Activated naive CD4-positive, alpha-beta T cell treated with anti-CD3 and anti-CD28 coated beads for 36 hours (primary cell): ENCODE measurements at regions of chr20 and their contacts with region 1.

Region 1: DNA sequence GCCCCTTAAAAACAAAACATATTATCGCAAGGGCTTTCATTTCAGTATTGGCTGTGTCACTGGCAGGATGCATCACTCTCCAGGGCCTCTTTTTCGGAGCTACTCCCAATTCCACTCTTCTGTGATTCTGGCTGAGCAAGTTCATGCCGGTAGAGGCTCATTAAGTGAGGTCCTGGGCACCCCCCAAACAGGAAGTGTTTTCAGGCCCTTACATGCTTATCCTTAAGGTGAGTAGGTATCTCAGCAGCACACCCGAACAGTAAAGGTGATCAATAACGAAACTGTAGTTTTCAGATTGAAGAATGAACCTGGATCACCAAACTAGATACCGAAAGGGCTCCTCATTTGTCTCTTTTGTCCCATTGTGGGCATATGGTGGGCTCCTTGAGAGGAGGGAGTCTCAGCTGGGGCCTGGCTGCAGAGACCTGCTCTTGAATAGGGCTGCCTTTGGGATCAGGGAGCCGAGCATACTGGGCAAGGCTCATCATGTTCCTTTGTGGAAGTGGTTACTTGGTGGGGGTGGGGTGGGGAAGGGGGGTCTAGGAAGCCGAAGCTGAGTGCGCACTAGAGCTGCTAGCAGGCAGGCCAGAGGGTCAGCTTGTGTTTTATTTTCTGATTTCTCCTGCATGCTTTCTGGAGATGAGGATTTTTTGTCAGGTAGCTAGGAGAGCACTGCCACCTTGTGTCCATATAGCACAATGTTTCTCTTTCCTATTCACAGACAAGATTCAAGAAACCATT is 65.2 kb downstream of the CDS2 start:
- DNase-seq: peak; percentile 67
- H3K4me3 Mint-ChIP-seq: no peak overlapping the region
- H3K27ac Mint-ChIP-seq: peak overlapping the region; percentile 78
- H3K4me1 Mint-ChIP-seq: peaks cover 19% of the 10 kb centered on the region
- H3K27me3 Mint-ChIP-seq: no peaks in the 10 kb centered on the region

Region 2: GRCh38 chr20:5056801-5057599 is 135.0 kb before region 1 on chr20:
- CTCF ChIA-PET with region 1: interaction called, 9 read pairs
- intact Hi-C with region 1: loop called (anchors 1 kb)
- DNase-seq: peak; percentile 84
- H3K4me3 Mint-ChIP-seq: peak overlapping the region; percentile 10
- H3K27ac Mint-ChIP-seq: peak overlapping the region; percentile 46
- H3K4me1 Mint-ChIP-seq: peaks cover 16% of the 10 kb centered on the region
- H3K27me3 Mint-ChIP-seq: no peaks in the 10 kb centered on the region

Region 3: GRCh38 chr20:5119435-5120188 is 72.4 kb before region 1 on chr20 and contains the start of gene PCNA:
- CTCF ChIA-PET with region 1: interaction called, 180 read pairs
- intact Hi-C with region 1: no loop called
- DNase-seq: peak; percentile 99
- H3K4me3 Mint-ChIP-seq: peak within 1 kb of the TSS; percentile 93
- H3K27ac Mint-ChIP-seq: peak within 1 kb of the TSS; percentile 99
- H3K4me1 Mint-ChIP-seq: peaks cover 44% of the 10 kb centered on the region
- H3K27me3 Mint-ChIP-seq: no peaks in the 10 kb centered on the region
- total RNA-seq, gene PCNA: 631 to 641 TPM

Region 4: GRCh38 chr20:5168651-5169396 is 23.2 kb before region 1 on chr20:
- CTCF ChIA-PET with region 1: interaction called, 18 read pairs
- intact Hi-C with region 1: loop called (anchors 2 kb)
- DNase-seq: peak; percentile 16
- H3K4me3 Mint-ChIP-seq: no peak overlapping the region
- H3K27ac Mint-ChIP-seq: peak overlapping the region; percentile 47
- H3K4me1 Mint-ChIP-seq: peaks cover 66% of the 10 kb centered on the region
- H3K27me3 Mint-ChIP-seq: no peaks in the 10 kb centered on the region

Region 5: DNA sequence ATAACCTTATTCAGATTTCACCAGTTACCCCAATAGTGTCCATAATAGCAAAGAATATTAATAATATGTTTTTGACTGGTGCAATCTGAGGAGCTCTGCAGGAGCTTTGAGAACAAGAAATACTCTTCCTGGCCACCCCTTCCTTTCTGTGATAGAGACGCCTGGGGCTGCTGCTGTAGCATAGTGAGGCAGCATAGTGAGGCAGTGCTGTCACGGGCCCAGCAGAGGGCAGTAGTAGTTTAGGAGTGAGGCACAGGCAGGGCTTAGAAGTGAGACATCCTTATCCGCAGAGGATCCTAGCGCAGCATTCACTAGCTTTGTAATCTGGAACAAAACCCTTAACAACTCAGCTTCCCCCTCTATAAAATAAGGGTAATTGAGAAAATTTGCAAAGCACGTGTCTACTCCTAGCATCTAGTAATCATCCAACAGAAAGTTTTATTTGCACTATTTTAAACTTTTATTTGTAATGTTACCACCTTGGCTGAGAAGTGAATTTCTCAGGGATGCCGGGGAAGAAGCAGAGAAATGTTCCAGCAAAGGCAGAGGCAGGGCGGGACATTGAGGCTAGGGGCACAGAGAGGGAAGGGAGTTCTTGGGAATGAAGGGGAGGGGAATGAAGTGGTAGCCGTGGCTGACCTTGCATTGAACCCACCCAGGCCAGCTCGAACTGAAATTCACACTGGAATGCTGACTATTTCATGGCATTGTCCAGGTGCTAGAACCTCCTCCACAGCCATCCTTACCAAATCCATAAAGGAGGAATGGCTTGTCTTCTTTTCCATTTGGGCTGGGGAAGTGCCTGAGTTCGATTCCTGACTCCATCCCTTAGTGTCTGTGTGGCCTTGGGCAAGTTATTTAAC is 13.6 kb after region 1 on chr20:
- CTCF ChIA-PET with region 1: interaction called, 13 read pairs
- intact Hi-C with region 1: no loop called
- DNase-seq: peak; percentile 86
- H3K4me3 Mint-ChIP-seq: no peak overlapping the region
- H3K27ac Mint-ChIP-seq: no peak overlapping the region
- H3K4me1 Mint-ChIP-seq: peaks cover 2% of the 10 kb centered on the region
- H3K27me3 Mint-ChIP-seq: no peaks in the 10 kb centered on the region

Region 6: DNA sequence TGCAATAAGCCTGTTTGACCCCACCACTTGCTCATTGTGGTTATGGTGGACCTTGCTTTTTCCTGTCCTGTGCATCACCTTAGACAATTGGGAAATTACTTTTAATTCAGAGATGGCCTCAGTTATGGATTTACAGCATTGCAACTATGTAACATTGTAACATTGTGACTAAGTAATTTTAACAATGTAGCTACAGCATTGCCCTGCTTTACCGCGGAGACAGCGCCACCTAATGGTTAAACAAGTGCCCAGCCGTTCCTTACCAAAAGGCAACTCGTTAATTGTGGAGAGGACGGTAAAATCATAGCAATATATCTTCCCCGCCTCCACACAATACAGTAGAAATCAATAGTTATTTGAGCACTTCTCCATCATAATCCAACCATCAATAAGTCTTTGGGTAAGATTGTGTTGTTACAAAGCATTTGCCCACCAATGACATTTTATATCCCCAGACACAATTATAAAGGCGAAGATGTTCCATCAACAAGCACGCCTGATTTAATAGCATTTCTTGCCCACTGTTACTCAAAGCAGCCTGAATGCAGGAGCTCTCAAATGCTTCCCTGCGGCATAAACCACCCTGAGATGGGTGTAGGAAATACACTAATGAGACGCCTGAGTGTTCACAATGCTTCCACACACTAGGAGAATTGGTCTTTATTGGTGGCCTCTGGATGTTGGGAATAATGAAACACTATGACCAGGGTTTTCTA is 31.1 kb after region 1 on chr20:
- CTCF ChIA-PET with region 1: interaction called, 5 read pairs
- intact Hi-C with region 1: loop called (anchors 2 kb)
- DNase-seq: peak; percentile 83
- H3K4me3 Mint-ChIP-seq: no peak overlapping the region
- H3K27ac Mint-ChIP-seq: no peak overlapping the region
- H3K4me1 Mint-ChIP-seq: no peaks in the 10 kb centered on the region
- H3K27me3 Mint-ChIP-seq: peaks cover 2% of the 10 kb centered on the region